ENCODE measurements at regions of chr7 and their contacts with region 1.

Region 1: GRCh38 chr7:130010689-130011412 is 40.3 kb downstream of the ZC3HC1 start:
- DNase-seq: peak; percentile 98
- ATAC-seq: peak; percentile 58; the same call in 1 of the 2 replicates
- H3K4me3 ChIP-seq: no peak overlapping the region
- H3K27ac ChIP-seq: peak overlapping the region; percentile 52; the same call in 1 of the 2 replicates
- H3K4me1 ChIP-seq: peaks cover 22% of the 10 kb centered on the region
- H3K27me3 ChIP-seq: no peaks in the 10 kb centered on the region
- CTCF ChIP-seq: peak; percentile 93

Region 2: DNA sequence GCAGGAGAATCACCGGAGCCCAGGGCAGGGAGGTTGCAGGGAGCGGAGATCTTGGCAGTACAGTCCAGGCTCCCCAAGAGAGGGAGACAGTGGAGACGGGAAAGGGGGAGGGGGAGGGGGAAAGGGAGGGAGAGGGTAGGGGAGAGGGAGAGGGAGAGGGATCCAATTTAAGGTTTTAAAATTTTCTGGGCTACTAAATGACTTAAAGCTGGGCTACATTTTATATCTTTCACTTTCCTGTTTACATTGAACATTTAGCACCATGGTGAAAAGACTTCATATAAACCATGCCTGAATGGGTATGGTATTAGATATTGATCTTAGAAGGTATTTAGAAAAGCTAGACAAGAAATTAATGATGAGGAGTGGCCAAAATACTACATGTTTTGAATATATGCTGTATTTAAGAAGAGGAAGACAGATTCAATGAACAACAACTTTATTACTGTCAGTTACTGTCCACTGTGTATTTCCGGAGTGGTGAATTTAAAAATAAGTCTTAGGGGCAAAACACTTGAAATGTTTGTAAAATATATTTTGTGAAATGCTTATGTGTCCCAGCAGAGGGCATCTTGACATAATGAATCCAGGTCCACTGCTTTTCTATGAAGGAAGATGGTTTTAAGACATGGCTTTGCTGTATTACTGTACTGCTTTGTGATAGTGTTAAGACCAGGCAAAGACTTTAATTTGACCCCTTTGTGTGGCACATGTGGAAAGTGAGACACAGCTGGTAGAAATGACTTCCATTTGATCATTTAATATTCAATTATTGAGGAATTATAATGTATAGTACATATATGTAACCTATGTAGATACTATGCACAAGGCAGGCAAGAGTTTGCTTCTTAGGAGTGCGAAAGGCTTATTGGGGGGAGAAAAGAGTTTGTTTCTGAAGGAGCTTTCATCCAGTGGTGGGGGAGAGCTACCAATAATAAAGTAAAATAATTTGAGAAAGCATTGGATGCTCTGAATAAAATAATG is 346.5 kb before region 1 on chr7:
- CTCF ChIA-PET with region 1: no interaction called
- POLR2A ChIA-PET with region 1: no interaction called
- in situ Hi-C with region 1: no loop called
- intact Hi-C with region 1: loop called (anchors 5 kb)
- DNase-seq: peak; percentile 69
- ATAC-seq: peak; percentile 82
- H3K4me3 ChIP-seq: no peak overlapping the region
- H3K27ac ChIP-seq: peak overlapping the region; percentile 13; the same call in 1 of the 2 replicates
- H3K4me1 ChIP-seq: peaks cover 8% of the 10 kb centered on the region
- H3K27me3 ChIP-seq: no peaks in the 10 kb centered on the region
- CTCF ChIP-seq: peak; percentile 67; the same call in 1 of the 2 replicates

Region 3: GRCh38 chr7:129830949-129831348 is 179.9 kb before region 1 on chr7:
- CTCF ChIA-PET with region 1: interaction called, 11 read pairs
- POLR2A ChIA-PET with region 1: no interaction called
- in situ Hi-C with region 1: no loop called
- intact Hi-C with region 1: loop called (anchors 2 kb)
- DNase-seq: no peak
- ATAC-seq: no peak
- H3K4me3 ChIP-seq: no peak overlapping the region
- H3K27ac ChIP-seq: 0 out of 2 replicates have a peak overlapping the region, but pooled peaks have one; percentile 30
- H3K4me1 ChIP-seq: peaks cover 20% of the 10 kb centered on the region
- H3K27me3 ChIP-seq: no peaks in the 10 kb centered on the region
- CTCF ChIP-seq: no peak

Region 4: GRCh38 chr7:130032698-130033097 is 21.8 kb after region 1 on chr7:
- CTCF ChIA-PET with region 1: interaction called, 20 read pairs
- POLR2A ChIA-PET with region 1: no interaction called
- in situ Hi-C with region 1: no loop called
- intact Hi-C with region 1: no loop called
- DNase-seq: no peak
- ATAC-seq: no peak
- H3K4me3 ChIP-seq: no peak overlapping the region
- H3K27ac ChIP-seq: no peak overlapping the region
- H3K4me1 ChIP-seq: no peaks in the 10 kb centered on the region
- H3K27me3 ChIP-seq: no peaks in the 10 kb centered on the region
- CTCF ChIP-seq: no peak

Region 5: GRCh38 chr7:130234078-130234477 is 223.2 kb after region 1 on chr7:
- CTCF ChIA-PET with region 1: no interaction called
- POLR2A ChIA-PET with region 1: no interaction called
- in situ Hi-C with region 1: no loop called
- intact Hi-C with region 1: no loop called
- DNase-seq: no peak
- ATAC-seq: no peak
- H3K4me3 ChIP-seq: no peak overlapping the region
- H3K27ac ChIP-seq: no peak overlapping the region
- H3K4me1 ChIP-seq: no peaks in the 10 kb centered on the region
- H3K27me3 ChIP-seq: no peaks in the 10 kb centered on the region
- CTCF ChIP-seq: no peak